B cell (primary cell): ENCODE measurements at regions of chr13 and their contacts with region 1.

Region 1: DNA sequence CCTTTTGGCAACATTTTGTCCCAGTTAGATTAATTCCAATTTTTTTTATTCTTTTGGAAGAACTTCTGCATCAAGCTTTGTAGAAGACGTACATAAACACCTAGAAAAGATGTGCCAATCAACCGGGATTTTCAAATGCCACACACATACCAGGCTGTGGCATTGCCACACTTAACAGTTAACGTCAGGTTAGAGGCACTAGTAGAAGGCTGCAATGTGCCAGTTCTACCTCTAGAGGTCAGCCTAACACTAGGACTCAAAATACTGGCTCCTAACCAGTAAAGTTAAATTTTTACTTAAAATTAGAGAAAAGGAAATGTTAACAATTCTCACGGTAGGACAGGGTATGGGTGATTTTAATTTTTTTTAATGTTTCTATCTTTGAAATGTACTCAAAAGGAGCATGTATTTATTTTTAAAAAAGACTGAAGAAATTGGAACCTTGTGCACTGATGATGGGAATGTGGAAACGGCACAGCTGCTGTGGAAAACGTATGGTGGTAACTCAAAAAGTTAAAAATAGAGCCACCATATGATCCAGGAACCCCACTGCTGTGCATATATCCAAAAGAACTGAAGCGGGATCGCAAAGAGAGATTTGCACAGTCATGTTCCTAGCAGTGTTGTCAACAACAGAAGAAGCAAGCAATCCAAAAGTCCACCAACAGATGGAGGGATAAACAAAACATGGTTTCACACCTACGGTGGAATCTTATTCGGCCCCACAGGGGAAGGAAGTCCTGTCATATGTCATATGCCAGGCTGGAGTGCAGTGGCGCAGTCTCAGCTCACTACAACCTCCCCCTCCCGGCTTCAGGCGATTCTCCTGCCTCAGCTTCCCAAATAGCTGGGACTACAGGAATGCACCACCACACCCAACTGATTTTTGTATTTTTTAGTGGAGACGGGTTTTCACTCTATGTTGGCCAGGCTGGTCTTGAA is 30.3 kb downstream of the CRYL1 start:
- DNase-seq: peak; percentile 76
- ATAC-seq: peak; percentile 88
- H3K4me3 ChIP-seq: no peak overlapping the region
- H3K4me3 Mint-ChIP-seq: no peak overlapping the region
- H3K27ac ChIP-seq: no peak overlapping the region
- H3K27ac Mint-ChIP-seq: no peak overlapping the region
- H3K4me1 ChIP-seq: peaks cover 4 to 5% of the 10 kb centered on the region in 2 donors
- H3K4me1 Mint-ChIP-seq: no peaks in the 10 kb centered on the region
- H3K27me3 ChIP-seq: no peaks in the 10 kb centered on the region
- H3K27me3 Mint-ChIP-seq: no peaks in the 10 kb centered on the region
- CTCF ChIP-seq: peak; percentile 98

Region 2: GRCh38 chr13:20475927-20476691 is 19.2 kb before region 1 on chr13:
- CTCF ChIA-PET with region 1: interaction called, 11 read pairs
- POLR2A ChIA-PET with region 1: no interaction called
- intact Hi-C with region 1: no loop called
- DNase-seq: peak; percentile 68
- ATAC-seq: peak; percentile 84
- H3K4me3 ChIP-seq: peak overlapping the region in 4 of 5 experiments; percentile 0 to 43 (median 20)
- H3K4me3 Mint-ChIP-seq: peak overlapping the region; percentile 72
- H3K27ac ChIP-seq: peak overlapping the region; percentile 34 to 57
- H3K27ac Mint-ChIP-seq: peak overlapping the region; percentile 83
- H3K4me1 ChIP-seq: peaks cover 22 to 25% of the 10 kb centered on the region in 2 donors
- H3K4me1 Mint-ChIP-seq: peaks cover 28% of the 10 kb centered on the region
- H3K27me3 ChIP-seq: no peaks in the 10 kb centered on the region
- H3K27me3 Mint-ChIP-seq: no peaks in the 10 kb centered on the region
- CTCF ChIP-seq: no peak

Region 3: DNA sequence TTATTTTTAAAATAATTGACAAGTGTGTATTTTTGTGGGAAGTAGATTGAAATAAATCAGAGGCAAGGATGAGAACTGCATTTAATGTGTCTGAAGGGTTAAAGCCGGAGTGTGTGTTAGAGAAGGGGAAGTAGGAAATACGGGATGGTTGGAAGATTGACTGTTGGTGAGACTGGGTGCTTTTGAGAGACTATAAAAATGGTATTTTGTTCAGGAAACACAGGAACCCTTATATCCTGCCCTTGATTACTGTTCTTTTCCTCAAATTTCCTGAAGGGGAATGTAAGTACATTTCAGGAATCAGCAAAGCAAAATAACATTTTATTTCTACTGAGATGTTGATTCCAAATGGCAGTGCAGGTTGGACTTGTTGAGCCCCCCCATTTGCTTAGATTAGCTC is 86.7 kb after region 1 on chr13:
- CTCF ChIA-PET with region 1: interaction called, 6 read pairs
- POLR2A ChIA-PET with region 1: no interaction called
- intact Hi-C with region 1: loop called (anchors 2 kb)
- DNase-seq: no peak
- ATAC-seq: no peak
- H3K4me3 ChIP-seq: no peak overlapping the region
- H3K4me3 Mint-ChIP-seq: no peak overlapping the region
- H3K27ac ChIP-seq: no peak overlapping the region
- H3K27ac Mint-ChIP-seq: no peak overlapping the region
- H3K4me1 ChIP-seq: no peaks in the 10 kb centered on the region
- H3K4me1 Mint-ChIP-seq: no peaks in the 10 kb centered on the region
- H3K27me3 ChIP-seq: no peaks in the 10 kb centered on the region
- H3K27me3 Mint-ChIP-seq: no peaks in the 10 kb centered on the region
- CTCF ChIP-seq: no peak

Region 4: DNA sequence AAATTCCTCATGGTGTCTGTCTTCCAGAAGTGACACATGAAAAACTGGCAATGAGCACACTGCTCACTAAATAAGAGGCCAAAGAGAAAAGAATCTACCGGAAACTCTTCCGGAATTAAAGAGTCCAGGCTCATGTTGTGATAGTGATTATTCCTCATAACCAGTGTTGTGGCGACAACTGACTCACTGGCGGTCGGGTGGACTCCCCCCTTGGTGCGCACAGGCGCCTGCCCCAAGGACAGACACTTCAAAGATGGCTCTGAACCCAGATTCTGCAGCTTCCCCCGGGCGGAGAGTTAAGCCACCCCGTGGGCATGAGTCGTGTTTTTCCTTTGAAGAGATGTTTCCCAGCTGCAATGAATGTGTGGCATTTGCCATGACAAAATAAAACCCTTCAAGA is 218.4 kb after region 1 on chr13:
- CTCF ChIA-PET with region 1: interaction called, 5 read pairs
- POLR2A ChIA-PET with region 1: no interaction called
- intact Hi-C with region 1: loop called (anchors 1 kb)
- DNase-seq: no peak
- ATAC-seq: no peak
- H3K4me3 ChIP-seq: no peak overlapping the region
- H3K4me3 Mint-ChIP-seq: no peak overlapping the region
- H3K27ac ChIP-seq: no peak overlapping the region
- H3K27ac Mint-ChIP-seq: no peak overlapping the region
- H3K4me1 ChIP-seq: peaks cover 0 to 8% of the 10 kb centered on the region in 2 donors
- H3K4me1 Mint-ChIP-seq: peaks cover 7% of the 10 kb centered on the region
- H3K27me3 ChIP-seq: peaks cover 0 to 4% (median 0%) of the 10 kb centered on the region in 4 experiments
- H3K27me3 Mint-ChIP-seq: peaks cover 8% of the 10 kb centered on the region
- CTCF ChIP-seq: no peak

Region 5: DNA sequence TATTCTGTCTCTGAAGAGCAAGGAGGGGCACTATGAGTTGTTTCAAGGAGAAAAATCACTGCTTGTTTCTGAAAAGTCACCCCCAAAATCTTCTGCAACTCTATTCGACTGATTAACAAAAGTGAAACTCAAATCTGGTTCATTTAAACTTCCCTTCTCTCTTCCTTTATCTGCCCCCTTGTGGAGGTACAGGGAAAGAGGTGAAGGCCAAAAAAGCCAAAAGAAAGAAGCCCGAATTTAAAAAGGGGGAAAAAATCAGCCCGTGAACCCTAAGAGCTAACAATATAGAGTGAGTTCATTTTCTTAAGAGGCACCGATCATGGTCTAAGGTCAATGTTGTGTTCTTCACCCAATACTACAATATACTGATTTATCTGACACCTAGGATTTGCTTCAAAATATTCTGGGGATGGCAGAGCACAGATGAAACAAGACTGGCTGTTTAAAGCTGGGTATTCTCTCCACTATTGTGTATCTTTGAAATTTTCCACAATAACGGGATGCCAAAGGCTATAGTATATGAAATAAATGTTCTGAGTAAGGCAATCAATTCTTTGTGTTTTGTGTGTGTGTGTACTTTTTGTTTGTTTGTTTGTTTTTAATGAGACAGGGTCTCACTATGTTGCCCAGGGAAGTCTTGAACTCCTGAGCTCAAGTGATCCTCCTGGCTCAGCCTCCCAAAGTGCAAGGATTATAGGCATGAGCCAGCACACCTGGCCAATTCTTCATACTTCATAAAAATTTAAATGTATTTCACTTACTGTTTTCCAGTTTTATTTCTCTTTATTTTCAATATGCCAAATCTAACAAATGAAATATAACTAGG is 333.4 kb after region 1 on chr13:
- CTCF ChIA-PET with region 1: interaction called, 153 read pairs
- POLR2A ChIA-PET with region 1: no interaction called
- intact Hi-C with region 1: loop called (anchors 1 kb)
- DNase-seq: peak; percentile 76
- ATAC-seq: peak; percentile 82
- H3K4me3 ChIP-seq: no peak overlapping the region
- H3K4me3 Mint-ChIP-seq: peak overlapping the region; percentile 32
- H3K27ac ChIP-seq: peak overlapping the region in 1 of 2 donors; percentile 74
- H3K27ac Mint-ChIP-seq: peak overlapping the region; percentile 8
- H3K4me1 ChIP-seq: no peaks in the 10 kb centered on the region
- H3K4me1 Mint-ChIP-seq: peaks cover 9% of the 10 kb centered on the region
- H3K27me3 ChIP-seq: no peaks in the 10 kb centered on the region
- H3K27me3 Mint-ChIP-seq: no peaks in the 10 kb centered on the region
- CTCF ChIP-seq: peak; percentile 81